ENCODE measurements at regions of chr5 and their contacts with region 1.

Region 1: GRCh38 chr5:74182603-74183002 is 457.9 kb downstream of the ENC1 start:
- DNase-seq: no peak
- H3K4me3 ChIP-seq: no peak overlapping the region
- H3K27ac ChIP-seq: no peak overlapping the region
- H3K4me1 ChIP-seq: no peaks in the 10 kb centered on the region
- H3K27me3 ChIP-seq: no peaks in the 10 kb centered on the region
- CTCF ChIP-seq: no peak

Region 2: DNA sequence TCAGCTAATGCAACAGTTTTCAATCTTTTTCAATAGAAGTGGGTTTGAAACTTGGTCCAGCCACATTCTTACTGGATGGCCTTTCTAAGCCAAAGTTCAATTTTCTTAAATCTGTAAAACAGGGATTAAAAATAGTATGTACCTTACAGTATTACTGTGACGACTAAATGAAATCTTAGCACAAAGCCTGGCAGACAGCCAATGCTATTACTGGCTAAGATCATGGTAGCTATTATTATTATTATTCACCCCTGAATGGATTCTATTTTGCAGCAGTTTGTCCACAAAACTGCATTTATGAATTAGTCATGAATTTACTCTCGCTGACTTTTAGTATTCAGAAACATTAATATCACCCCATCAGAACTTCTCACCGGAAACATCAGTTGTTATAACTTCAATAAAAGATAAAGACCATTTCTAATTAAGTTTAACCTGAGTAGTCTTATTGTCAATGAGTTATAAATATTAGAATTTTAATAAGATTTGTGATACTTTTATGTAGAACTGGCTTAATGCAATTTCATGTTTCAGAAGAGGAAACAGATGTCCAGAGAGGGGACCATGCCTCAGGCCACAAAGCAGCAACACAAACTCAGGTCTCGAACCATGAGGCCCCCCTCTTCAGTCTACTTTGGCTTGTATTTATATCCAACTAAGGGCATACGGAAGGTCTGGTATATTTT is 88.4 kb before region 1 on chr5:
- CTCF ChIA-PET with region 1: no interaction called
- dilution Hi-C with region 1: loop called (anchors 5 kb)
- in situ Hi-C with region 1: no loop called
- intact Hi-C with region 1: no loop called
- DNase-seq: peak; percentile 51
- H3K4me3 ChIP-seq: no peak overlapping the region
- H3K27ac ChIP-seq: no peak overlapping the region
- H3K4me1 ChIP-seq: no peaks in the 10 kb centered on the region
- H3K27me3 ChIP-seq: no peaks in the 10 kb centered on the region
- CTCF ChIP-seq: no peak

Region 3: DNA sequence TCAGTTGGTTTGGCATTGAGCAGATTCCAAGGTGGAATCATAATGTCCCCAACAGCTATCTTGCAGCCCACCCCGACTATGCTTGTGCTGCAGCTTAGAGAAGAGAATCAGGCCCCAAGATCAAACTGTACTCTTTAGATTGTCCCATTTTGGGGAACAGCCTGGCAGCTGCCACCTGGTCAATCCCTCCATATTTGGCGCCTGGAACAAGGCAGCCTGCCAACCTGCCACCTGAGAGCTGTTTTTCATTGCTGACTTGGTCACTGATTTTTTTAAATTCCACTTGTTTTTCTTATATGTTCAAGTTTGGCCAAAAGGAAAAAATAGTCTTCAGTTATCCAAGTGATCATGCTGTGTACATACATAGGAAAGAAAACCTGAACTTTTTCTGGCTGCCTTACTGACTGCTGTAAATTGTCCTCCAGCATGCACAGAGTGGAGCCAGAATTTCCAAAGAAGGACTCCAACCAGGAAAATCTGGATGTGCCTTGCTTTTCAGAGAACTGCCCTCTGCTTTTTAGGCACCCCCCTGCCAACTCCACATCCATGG is 46.3 kb before region 1 on chr5:
- CTCF ChIA-PET with region 1: no interaction called
- dilution Hi-C with region 1: loop called (anchors 5 kb)
- in situ Hi-C with region 1: no loop called
- intact Hi-C with region 1: no loop called
- DNase-seq: no peak
- H3K4me3 ChIP-seq: no peak overlapping the region
- H3K27ac ChIP-seq: no peak overlapping the region
- H3K4me1 ChIP-seq: no peaks in the 10 kb centered on the region
- H3K27me3 ChIP-seq: no peaks in the 10 kb centered on the region
- CTCF ChIP-seq: no peak